Activated naive CD4-positive, alpha-beta T cell treated with anti-CD3 and anti-CD28 coated beads for 36 hours (primary cell): ENCODE measurements at regions of chr10 and their contacts with region 1.

Region 1: DNA sequence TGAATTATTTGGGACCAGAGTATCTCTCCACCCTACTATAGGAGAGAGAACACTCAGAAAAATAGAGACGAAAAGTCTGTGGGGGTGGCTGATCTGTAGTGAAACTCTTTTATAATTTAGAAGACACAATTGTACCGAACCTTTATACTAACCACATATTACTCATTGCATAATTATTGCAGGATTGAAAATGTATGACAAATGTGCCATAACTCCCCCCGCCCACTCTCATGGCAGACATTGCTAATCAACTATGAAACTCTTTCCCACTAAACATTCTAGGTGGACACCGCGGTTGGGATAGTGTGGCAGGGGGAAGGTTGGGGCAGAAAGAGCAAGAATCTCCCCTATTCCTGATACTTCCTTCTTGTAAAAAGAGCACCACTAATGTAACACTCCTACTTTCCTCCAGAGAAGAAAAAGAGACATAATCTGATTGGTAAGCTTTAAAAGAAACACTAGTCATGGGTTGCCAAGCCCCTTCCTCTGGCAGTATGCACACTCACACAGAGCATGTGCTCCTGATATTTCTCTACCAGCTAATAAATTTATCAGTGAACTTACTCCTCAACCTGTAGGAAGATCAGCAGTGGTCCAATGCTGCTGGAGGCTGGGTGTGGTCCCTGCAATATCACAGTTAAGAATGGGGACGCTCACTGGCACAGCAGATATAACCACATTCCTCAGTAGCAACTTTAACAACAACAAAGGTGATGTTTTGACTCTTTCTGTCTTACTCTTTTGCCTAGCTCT is 18.7 kb upstream of the ARID5B start:
- DNase-seq: peak; percentile 88
- H3K4me3 Mint-ChIP-seq: no peak overlapping the region
- H3K27ac Mint-ChIP-seq: peak overlapping the region; percentile 83
- H3K4me1 Mint-ChIP-seq: peaks cover 30% of the 10 kb centered on the region
- H3K27me3 Mint-ChIP-seq: no peaks in the 10 kb centered on the region

Region 2: GRCh38 chr10:61284222-61284890 is 598.4 kb before region 1 on chr10:
- CTCF ChIA-PET with region 1: no interaction called
- intact Hi-C with region 1: loop called (anchors 10 kb)
- DNase-seq: no peak
- H3K4me3 Mint-ChIP-seq: peak overlapping the region; percentile 41
- H3K27ac Mint-ChIP-seq: no peak overlapping the region
- H3K4me1 Mint-ChIP-seq: peaks cover 17% of the 10 kb centered on the region
- H3K27me3 Mint-ChIP-seq: peaks cover 2% of the 10 kb centered on the region

Region 3: DNA sequence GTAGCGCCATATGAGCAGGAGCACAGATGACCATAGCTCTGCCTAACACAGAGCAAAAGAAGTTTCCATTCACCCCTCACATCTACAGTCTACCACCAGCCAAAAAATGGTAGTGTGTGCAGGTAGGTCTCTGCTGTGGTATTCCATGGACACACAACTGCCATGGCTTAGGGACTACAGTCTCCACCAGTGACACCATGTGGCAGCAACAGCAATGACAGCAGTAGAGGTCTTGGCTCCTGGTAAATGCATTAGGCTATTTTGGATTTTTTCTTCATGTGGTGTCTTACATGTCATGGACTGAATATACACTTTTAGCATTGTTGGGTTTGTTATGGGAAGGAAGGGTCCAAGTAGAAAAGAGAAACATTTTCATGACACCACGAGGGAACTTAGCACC is 290.2 kb before region 1 on chr10:
- CTCF ChIA-PET with region 1: no interaction called
- intact Hi-C with region 1: no loop called
- DNase-seq: no peak
- H3K4me3 Mint-ChIP-seq: no peak overlapping the region
- H3K27ac Mint-ChIP-seq: no peak overlapping the region
- H3K4me1 Mint-ChIP-seq: no peaks in the 10 kb centered on the region
- H3K27me3 Mint-ChIP-seq: peaks cover 6% of the 10 kb centered on the region

Region 4: GRCh38 chr10:61943674-61944410 is 61.0 kb after region 1 on chr10:
- CTCF ChIA-PET with region 1: no interaction called
- intact Hi-C with region 1: loop called (anchors 1 kb)
- DNase-seq: peak; percentile 47
- H3K4me3 Mint-ChIP-seq: peak overlapping the region; percentile 62
- H3K27ac Mint-ChIP-seq: peak overlapping the region; percentile 98
- H3K4me1 Mint-ChIP-seq: peaks cover 71% of the 10 kb centered on the region
- H3K27me3 Mint-ChIP-seq: no peaks in the 10 kb centered on the region

Region 5: DNA sequence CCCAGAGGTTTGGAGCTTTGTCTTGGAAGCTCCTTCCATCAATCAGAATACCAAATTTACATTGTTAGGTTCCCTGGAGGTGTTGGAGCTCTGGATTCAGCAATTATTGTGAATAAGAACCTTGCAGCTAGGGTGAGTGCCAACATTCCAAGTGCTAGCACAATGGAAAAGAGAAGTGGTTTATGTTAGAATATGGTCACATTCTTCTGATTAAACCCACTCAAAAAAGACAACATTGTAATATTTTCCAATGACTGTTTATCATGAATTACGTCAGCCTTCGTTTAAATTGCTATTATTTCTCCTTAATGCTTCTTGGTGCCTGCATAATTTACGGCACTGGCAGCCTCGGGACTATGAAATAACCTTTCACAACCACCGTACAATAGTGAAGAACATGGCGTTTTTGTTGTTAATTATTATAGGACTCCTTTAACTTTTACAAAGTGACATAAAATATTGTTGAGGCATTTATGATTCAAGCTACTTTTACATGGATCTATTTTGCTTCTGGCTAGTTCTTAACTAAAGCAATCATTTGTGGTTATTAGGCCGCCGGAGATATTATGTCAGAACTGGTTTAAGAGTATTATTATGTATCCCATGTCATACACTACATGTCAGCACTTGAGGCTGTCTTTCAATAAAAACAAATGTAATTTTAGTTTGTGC is 136.4 kb after region 1 on chr10:
- CTCF ChIA-PET with region 1: no interaction called
- intact Hi-C with region 1: loop called (anchors 1 kb)
- DNase-seq: no peak
- H3K4me3 Mint-ChIP-seq: peak overlapping the region; percentile 39
- H3K27ac Mint-ChIP-seq: peak overlapping the region; percentile 99
- H3K4me1 Mint-ChIP-seq: peaks cover 90% of the 10 kb centered on the region
- H3K27me3 Mint-ChIP-seq: no peaks in the 10 kb centered on the region

Region 6: GRCh38 chr10:62528441-62528840 is 645.6 kb after region 1 on chr10:
- CTCF ChIA-PET with region 1: no interaction called
- intact Hi-C with region 1: loop called (anchors 5 kb)
- DNase-seq: no peak
- H3K4me3 Mint-ChIP-seq: peak overlapping the region; percentile 19
- H3K27ac Mint-ChIP-seq: peak overlapping the region; percentile 26
- H3K4me1 Mint-ChIP-seq: peaks cover 37% of the 10 kb centered on the region
- H3K27me3 Mint-ChIP-seq: no peaks in the 10 kb centered on the region